Activated CD8-positive, alpha-beta T cell treated with anti-CD3 and anti-CD28 coated beads for 36 hours (primary cell): ENCODE measurements at regions of chr11 and their contacts with region 1.

Region 1: GRCh38 chr11:111777094-111778046 is 11.2 kb upstream of the PPP2R1B start:
- DNase-seq: peak; percentile 18
- ATAC-seq: peak; percentile 91
- H3K4me3 Mint-ChIP-seq: no peak overlapping the region
- H3K27ac Mint-ChIP-seq: no peak overlapping the region
- H3K4me1 Mint-ChIP-seq: no peaks in the 10 kb centered on the region
- H3K27me3 Mint-ChIP-seq: no peaks in the 10 kb centered on the region
- CTCF ChIP-seq: peak; percentile 80

Region 2: GRCh38 chr11:111454561-111455192 is 322.7 kb before region 1 on chr11:
- CTCF ChIA-PET with region 1: interaction called, 15 read pairs
- POLR2A ChIA-PET with region 1: no interaction called
- intact Hi-C with region 1: loop called (anchors 10 kb)
- DNase-seq: peak; percentile 87
- ATAC-seq: peak; percentile 93
- H3K4me3 Mint-ChIP-seq: no peak overlapping the region
- H3K27ac Mint-ChIP-seq: no peak overlapping the region
- H3K4me1 Mint-ChIP-seq: peaks cover 4% of the 10 kb centered on the region
- H3K27me3 Mint-ChIP-seq: peaks cover 6% of the 10 kb centered on the region
- CTCF ChIP-seq: peak; percentile 72

Region 3: GRCh38 chr11:111586388-111586831 is 191.0 kb before region 1 on chr11:
- CTCF ChIA-PET with region 1: interaction called, 74 read pairs
- POLR2A ChIA-PET with region 1: no interaction called
- intact Hi-C with region 1: no loop called
- DNase-seq: peak; percentile 74
- ATAC-seq: peak; percentile 70
- H3K4me3 Mint-ChIP-seq: no peak overlapping the region
- H3K27ac Mint-ChIP-seq: no peak overlapping the region
- H3K4me1 Mint-ChIP-seq: peaks cover 2% of the 10 kb centered on the region
- H3K27me3 Mint-ChIP-seq: peaks cover 3% of the 10 kb centered on the region
- CTCF ChIP-seq: peak; percentile 49

Region 4: DNA sequence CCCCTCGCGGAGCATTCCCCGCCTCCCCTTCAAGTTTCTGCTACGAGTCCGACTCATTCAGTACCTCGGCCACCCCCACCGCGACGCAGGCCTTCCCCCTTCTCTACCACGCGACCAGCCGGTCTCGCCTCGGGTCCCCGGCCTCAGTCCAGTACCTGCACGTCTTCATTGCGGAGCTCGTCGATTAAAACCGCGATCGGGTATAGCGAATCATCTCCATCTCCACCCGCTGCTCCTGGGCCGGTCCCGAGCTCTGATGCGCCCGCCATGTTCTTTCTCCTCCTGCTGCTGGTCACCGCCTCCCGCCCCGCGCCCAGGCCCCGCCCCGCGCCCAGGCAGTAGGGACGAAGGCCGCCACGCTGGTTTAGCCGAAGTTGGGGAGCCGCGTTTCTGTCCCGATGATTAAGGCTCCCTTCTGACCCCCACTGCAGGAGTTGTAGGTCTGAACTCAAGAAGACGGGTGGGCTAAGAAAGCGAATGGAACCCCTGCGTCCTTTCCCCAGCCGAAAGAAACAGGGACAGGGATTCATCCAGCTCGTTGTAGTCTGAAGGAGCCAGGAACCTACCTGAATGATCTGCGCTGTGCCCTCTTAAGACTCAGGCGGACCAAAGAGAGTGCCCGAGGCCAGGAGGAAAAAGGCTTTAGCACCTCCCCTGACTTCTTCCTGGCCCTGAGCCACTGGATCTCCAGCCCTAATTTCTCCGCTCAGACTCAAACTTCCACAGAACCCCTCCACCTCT is 11.1 kb before region 1 on chr11 and contains the start of gene PPP2R1B:
- CTCF ChIA-PET with region 1: interaction called, 91 read pairs
- POLR2A ChIA-PET with region 1: interaction called, 4 read pairs
- intact Hi-C with region 1: no loop called
- DNase-seq: peak; percentile 80
- ATAC-seq: peak; percentile 99
- H3K4me3 Mint-ChIP-seq: peak within 1 kb of the TSS; percentile 99
- H3K27ac Mint-ChIP-seq: peak within 1 kb of the TSS; percentile 98
- H3K4me1 Mint-ChIP-seq: peaks cover 30% of the 10 kb centered on the region
- H3K27me3 Mint-ChIP-seq: no peaks in the 10 kb centered on the region
- CTCF ChIP-seq: no peak
- total RNA-seq, gene PPP2R1B: 49.7 to 54.0 TPM

Region 5: GRCh38 chr11:111841370-111842053 is 64.1 kb after region 1 on chr11:
- CTCF ChIA-PET with region 1: interaction called, 61 read pairs
- POLR2A ChIA-PET with region 1: no interaction called
- intact Hi-C with region 1: loop called (anchors 5 kb)
- DNase-seq: peak; percentile 97
- ATAC-seq: peak; percentile 94
- H3K4me3 Mint-ChIP-seq: no peak overlapping the region
- H3K27ac Mint-ChIP-seq: no peak overlapping the region
- H3K4me1 Mint-ChIP-seq: peaks cover 11% of the 10 kb centered on the region
- H3K27me3 Mint-ChIP-seq: no peaks in the 10 kb centered on the region
- CTCF ChIP-seq: peak; percentile 95